ENCODE measurements at regions of chr11 and their contacts with region 1.

Region 1: DNA sequence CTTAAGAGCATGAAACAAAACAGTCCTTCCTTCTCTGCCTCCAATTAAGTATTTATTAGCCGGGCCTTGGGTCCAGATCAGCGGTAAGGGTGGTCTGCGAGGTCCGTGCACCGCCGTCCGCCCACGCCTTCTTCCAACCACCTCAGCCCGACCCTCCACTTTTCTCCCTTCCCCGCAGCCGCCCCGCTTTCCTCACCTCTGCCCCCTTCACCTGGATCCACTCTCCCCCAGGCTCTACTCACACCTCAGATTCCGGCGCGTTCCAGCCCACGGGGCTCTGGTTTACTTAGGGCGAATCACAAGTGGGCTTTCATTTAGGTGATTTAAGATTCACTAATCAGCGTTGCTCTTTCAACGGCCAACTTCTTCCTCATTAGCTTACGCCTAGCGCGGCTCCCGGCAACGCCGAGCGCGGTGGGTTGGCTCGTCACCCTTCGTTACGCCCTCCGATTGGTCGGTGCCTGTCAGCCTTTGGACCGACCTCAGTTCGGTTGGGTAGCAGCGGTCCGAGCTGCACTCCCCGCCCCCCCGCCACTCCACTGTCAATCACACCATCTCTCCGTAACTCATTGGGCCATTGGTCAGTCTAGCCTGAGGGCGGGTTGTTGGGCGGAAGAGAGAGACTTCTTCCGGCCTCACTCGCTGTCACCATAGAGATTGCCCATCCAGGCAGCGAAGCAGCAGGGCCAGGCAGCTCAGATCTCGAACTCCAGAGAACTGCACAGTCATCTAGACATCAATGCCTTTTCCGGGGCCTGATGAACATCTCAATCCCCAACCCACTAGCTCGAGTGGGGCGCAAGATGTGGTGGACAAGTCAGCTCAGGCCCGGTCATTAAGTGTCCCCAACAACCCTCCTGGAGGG is at the start of gene TMEM218:
- DNase-seq: peak; percentile 99
- H3K4me3 Mint-ChIP-seq: peak within 1 kb of the TSS; percentile 98
- H3K27ac Mint-ChIP-seq: peak within 1 kb of the TSS; percentile 96
- H3K4me1 Mint-ChIP-seq: peaks cover 5% of the 10 kb centered on the region
- H3K27me3 Mint-ChIP-seq: no peaks in the 10 kb centered on the region
- CTCF ChIP-seq: no peak
- total RNA-seq, gene TMEM218: 21.1 and 31.3 TPM in 2 replicates

Region 2: GRCh38 chr11:124953753-124954589 is 157.6 kb before region 1 on chr11 and contains the start of gene CCDC15:
- CTCF ChIA-PET with region 1: no interaction called
- POLR2A ChIA-PET with region 1: interaction called, 13 read pairs
- intact Hi-C with region 1: no loop called
- DNase-seq: peak; percentile 98
- H3K4me3 Mint-ChIP-seq: no peak within 1 kb of the TSS
- H3K27ac Mint-ChIP-seq: no peak within 1 kb of the TSS
- H3K4me1 Mint-ChIP-seq: peaks cover 9% of the 10 kb centered on the region
- H3K27me3 Mint-ChIP-seq: no peaks in the 10 kb centered on the region
- CTCF ChIP-seq: no peak
- total RNA-seq, gene CCDC15: 2.8 and 3.4 TPM in 2 replicates

Region 3: DNA sequence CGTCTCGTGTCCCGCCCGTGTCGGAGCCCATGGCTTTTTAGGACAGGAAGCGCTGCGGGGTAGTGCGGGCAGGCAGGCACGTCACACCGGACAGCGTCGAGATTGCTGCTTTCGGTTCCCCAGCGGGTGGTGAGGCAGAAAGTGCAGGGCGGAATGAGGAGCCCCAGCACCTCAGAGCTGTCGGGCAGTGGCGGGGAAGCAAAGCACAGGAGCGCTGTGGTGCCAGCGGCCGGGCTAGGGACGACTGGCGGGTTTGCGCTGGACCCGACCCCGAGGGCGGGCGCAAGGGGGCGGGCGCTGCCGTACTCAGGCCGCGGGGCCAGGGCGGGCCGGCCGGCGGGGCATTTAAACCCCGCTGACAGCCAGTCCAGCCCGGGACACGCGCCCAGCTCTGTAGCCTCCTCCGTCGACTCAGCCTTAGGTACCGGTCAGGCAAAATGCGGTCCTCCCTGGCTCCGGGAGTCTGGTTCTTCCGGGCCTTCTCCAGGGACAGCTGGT is 48.6 kb before region 1 on chr11 and contains the start of gene SLC37A2:
- CTCF ChIA-PET with region 1: interaction called, 5 read pairs
- POLR2A ChIA-PET with region 1: interaction called, 6 read pairs
- intact Hi-C with region 1: loop called (anchors 5 kb)
- DNase-seq: peak; percentile 62
- H3K4me3 Mint-ChIP-seq: peak within 1 kb of the TSS; percentile 86
- H3K27ac Mint-ChIP-seq: peak within 1 kb of the TSS; percentile 54
- H3K4me1 Mint-ChIP-seq: no peaks in the 10 kb centered on the region
- H3K27me3 Mint-ChIP-seq: no peaks in the 10 kb centered on the region
- CTCF ChIP-seq: peak; percentile 15
- total RNA-seq, gene SLC37A2: 5.2 and 7.8 TPM in 2 replicates

Region 4: DNA sequence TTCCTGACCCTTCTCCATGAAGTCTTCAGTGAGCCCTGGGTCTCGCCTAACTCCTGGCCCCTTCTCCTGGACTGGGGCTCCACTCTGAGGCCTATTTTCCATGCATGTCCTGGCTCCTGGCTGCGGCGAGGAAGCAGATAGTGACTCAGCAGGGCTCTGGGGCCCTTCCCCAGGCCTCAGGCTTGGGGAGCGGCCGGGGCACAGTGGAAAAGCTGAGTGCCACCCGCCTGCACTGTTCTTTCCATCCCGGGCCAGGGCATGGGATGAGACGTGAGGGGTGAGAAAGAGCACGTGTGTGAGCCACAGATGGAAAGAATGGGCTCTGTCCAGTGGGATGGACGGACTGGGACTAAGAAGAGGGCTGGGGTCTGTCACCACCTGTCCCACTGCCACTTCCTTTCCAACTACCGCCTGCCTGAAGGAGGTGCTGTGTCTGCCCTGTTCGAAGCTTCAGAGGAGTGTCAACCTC is 35.7 kb before region 1 on chr11:
- CTCF ChIA-PET with region 1: interaction called, 8 read pairs
- POLR2A ChIA-PET with region 1: interaction called, 15 read pairs
- intact Hi-C with region 1: no loop called
- DNase-seq: peak; percentile 77
- H3K4me3 Mint-ChIP-seq: no peak overlapping the region
- H3K27ac Mint-ChIP-seq: peak overlapping the region; percentile 84
- H3K4me1 Mint-ChIP-seq: peaks cover 42% of the 10 kb centered on the region
- H3K27me3 Mint-ChIP-seq: no peaks in the 10 kb centered on the region
- CTCF ChIP-seq: no peak

Region 5: GRCh38 chr11:125082611-125083311 is 28.8 kb before region 1 on chr11:
- CTCF ChIA-PET with region 1: interaction called, 11 read pairs
- POLR2A ChIA-PET with region 1: interaction called, 8 read pairs
- intact Hi-C with region 1: no loop called
- DNase-seq: peak; percentile 89
- H3K4me3 Mint-ChIP-seq: peak overlapping the region; percentile 68
- H3K27ac Mint-ChIP-seq: peak overlapping the region; percentile 96
- H3K4me1 Mint-ChIP-seq: peaks cover 48% of the 10 kb centered on the region
- H3K27me3 Mint-ChIP-seq: no peaks in the 10 kb centered on the region
- CTCF ChIP-seq: no peak

Region 6: GRCh38 chr11:125123947-125124617 is 12.5 kb after region 1 on chr11:
- CTCF ChIA-PET with region 1: interaction called, 14 read pairs
- POLR2A ChIA-PET with region 1: interaction called, 5 read pairs
- intact Hi-C with region 1: no loop called
- DNase-seq: peak; percentile 56
- H3K4me3 Mint-ChIP-seq: no peak overlapping the region
- H3K27ac Mint-ChIP-seq: no peak overlapping the region
- H3K4me1 Mint-ChIP-seq: no peaks in the 10 kb centered on the region
- H3K27me3 Mint-ChIP-seq: no peaks in the 10 kb centered on the region
- CTCF ChIP-seq: no peak